ENCODE measurements at regions of chr10 and their contacts with region 1.

Region 1: GRCh38 chr10:8044908-8045725 is 9.4 kb upstream of the GATA3 start:
- DNase-seq: peak; percentile 61
- CTCF ChIP-seq: no peak

Region 2: DNA sequence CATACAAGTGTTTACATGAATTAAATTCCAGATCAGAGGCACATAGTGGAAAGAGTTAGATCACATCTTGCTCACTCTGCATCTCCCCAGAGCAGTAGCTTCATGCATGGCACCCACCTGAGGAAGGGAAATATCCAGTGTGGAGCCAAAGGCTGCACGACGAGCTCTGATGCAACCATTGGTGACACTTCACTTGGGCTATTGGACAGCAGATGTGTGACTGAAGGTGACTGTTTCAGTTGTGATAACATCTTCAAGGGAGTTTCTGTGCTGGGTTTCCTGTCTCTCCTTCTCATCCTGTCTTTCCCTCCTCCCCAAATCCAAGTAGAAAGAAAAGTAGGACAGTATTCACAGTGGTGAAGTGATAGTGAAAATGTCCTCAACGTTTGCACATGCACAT is 111.9 kb before region 1 on chr10:
- in situ Hi-C with region 1: no loop called
- DNase-seq: no peak
- CTCF ChIP-seq: no peak

Region 3: GRCh38 chr10:8473205-8473604 is 428.1 kb after region 1 on chr10:
- in situ Hi-C with region 1: loop called (anchors 25 kb)
- DNase-seq: peak; percentile 17
- CTCF ChIP-seq: peak; percentile 29

Region 4: GRCh38 chr10:9209105-9209798 is 1164.1 kb after region 1 on chr10:
- in situ Hi-C with region 1: loop called (anchors 25 kb)
- DNase-seq: peak; percentile 51
- CTCF ChIP-seq: peak; percentile 90